ENCODE measurements at regions of chr7 and their contacts with region 1.

Region 1: DNA sequence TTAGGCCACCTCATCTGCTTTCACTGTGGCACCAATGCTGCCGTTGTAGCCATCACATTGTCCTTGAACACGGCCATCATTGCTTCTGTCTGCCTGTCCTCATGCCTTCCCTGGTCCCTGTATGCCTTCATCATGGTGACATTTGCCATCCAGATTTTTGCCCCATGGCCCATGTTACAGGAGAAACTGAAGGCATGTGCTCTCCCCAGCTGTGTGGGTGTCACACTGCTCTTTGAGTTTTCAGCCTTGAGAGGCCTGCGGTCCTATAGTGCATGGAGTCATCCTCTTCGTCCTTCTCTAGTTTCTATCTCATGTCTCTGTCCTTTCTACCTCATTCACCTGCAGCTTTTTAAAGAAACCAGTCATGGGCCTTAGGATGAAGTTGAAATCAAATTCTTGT is 6.2 kb upstream of the SLC26A3 start:
- DNase-seq: no peak
- ATAC-seq: no peak

Region 2: GRCh38 chr7:107700570-107700969 is 108.6 kb before region 1 on chr7:
- intact Hi-C with region 1: no loop called
- DNase-seq: no peak
- ATAC-seq: no peak

Region 3: GRCh38 chr7:107779647-107780099 is 29.5 kb before region 1 on chr7:
- intact Hi-C with region 1: loop called (anchors 1 kb)
- DNase-seq: no peak
- ATAC-seq: no peak

Measured in sciatic nerve (tissue), 2 donors.